ENCODE measurements at regions of chr13 and their contacts with region 1.

Region 1: DNA sequence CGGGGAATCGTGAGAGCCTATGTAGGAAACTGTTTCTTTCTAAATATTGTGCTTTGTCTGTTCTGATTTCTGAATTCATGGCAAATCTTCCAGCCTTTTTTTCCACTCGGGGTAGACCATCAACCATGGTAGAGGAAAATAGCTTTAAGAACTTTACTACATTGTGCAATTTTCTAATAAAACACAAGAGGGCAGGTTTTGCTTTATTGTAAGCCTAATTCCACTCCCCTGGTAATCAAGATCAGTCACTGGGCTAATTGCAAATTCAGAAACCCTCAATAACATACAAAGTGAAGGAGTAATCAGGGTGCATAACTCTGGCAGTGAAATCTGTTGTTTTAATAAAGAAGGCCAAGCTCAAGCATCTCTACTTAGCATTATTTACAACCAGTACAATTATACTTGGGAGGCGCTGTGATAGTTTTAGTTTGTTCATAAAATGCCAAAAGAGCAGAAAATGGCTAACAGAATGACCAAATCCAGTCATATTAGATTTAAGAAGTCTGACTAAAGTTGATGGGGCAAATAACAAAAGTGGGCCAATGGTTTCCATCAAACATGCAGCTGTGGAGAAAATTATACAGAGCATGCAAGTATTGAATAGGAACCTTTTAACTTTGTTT is 43.8 kb downstream of the DCT start:
- DNase-seq: no peak
- ATAC-seq: peak; percentile 58

Region 2: DNA sequence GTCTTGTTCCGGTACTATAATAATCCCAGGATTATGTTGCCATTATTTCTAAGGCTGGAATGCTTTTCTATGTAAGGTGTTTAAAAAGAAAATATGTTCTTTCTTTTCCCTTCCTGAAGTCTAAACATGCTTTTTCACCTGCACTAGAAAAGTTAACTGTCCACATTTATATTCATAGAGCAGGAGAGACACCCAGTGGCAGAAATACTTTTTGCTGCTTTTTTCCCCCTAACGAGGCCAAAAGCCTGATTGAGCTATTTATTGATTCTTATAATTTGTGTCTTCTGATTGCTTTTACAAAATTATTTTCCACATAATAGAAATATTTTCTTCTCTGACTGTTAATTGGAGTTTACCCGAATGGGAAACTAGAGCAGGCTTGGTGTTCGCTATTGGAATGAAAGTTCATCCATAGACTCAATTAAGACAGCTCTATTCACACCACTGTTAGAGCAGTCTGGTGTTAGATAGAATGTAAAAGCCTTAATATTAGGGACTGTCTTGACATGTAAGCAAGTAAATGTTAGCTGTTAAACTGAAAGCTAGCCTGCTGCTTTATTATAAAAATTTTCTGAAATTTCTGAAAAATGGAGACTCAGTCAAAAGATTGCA is 181.8 kb after region 1 on chr13:
- intact Hi-C with region 1: loop called in 1 of 2 experiments (anchors 2 kb)
- DNase-seq: no peak
- ATAC-seq: peak; percentile 58

Region 3: GRCh38 chr13:94731028-94731427 is 295.3 kb after region 1 on chr13:
- intact Hi-C with region 1: no loop called
- DNase-seq: no peak
- ATAC-seq: no peak

Measured in left colon (tissue), 2 donors.